Aorta (tissue), 5 donors: ENCODE measurements at regions of chr7 and their contacts with region 1.

Region 1: GRCh38 chr7:84529480-84530205 is 335.1 kb upstream of the SEMA3A start:
- DNase-seq: no peak
- ATAC-seq: no peak
- H3K4me3 ChIP-seq: no peak overlapping the region
- H3K27ac ChIP-seq: no peak overlapping the region
- H3K4me1 ChIP-seq: peaks cover 0 to 2% of the 10 kb centered on the region in 2 donors
- H3K27me3 ChIP-seq: no peaks in the 10 kb centered on the region

Region 2: GRCh38 chr7:84638339-84638697 is 108.7 kb after region 1 on chr7:
- intact Hi-C with region 1: no loop called
- DNase-seq: no peak
- ATAC-seq: no peak
- H3K4me3 ChIP-seq: no peak overlapping the region
- H3K27ac ChIP-seq: no peak overlapping the region
- H3K4me1 ChIP-seq: peaks cover 0 to 2% of the 10 kb centered on the region in 2 donors
- H3K27me3 ChIP-seq: no peaks in the 10 kb centered on the region

Region 3: DNA sequence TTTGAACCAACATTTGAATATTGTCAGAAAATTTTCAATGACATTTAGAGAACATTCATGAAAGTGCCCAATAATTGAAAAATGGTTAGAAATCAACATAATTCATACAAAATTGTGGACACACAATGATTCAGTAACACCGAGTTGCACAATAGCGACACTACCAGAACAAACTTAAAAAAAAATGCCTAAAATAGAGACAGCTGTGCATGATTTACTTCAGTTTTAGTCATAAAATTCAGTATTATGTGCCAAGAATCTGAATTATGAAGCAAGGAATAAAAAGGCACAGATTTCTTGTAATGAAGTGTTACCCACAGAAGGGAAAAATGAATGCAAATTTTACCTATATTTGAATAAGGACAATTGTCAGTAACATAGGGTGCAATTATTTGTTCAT is 261.2 kb after region 1 on chr7:
- intact Hi-C with region 1: loop called in 1 of 2 experiments (anchors 10 kb)
- DNase-seq: no peak
- ATAC-seq: no peak
- H3K4me3 ChIP-seq: no peak overlapping the region
- H3K27ac ChIP-seq: no peak overlapping the region
- H3K4me1 ChIP-seq: no peaks in the 10 kb centered on the region
- H3K27me3 ChIP-seq: no peaks in the 10 kb centered on the region

Region 4: GRCh38 chr7:84811362-84811761 is 281.7 kb after region 1 on chr7:
- intact Hi-C with region 1: loop called in 1 of 2 experiments (anchors 10 kb)
- DNase-seq: no peak
- ATAC-seq: no peak
- H3K4me3 ChIP-seq: no peak overlapping the region
- H3K27ac ChIP-seq: peak overlapping the region; percentile 28 to 71
- H3K4me1 ChIP-seq: no peaks in the 10 kb centered on the region
- H3K27me3 ChIP-seq: no peaks in the 10 kb centered on the region

Region 5: DNA sequence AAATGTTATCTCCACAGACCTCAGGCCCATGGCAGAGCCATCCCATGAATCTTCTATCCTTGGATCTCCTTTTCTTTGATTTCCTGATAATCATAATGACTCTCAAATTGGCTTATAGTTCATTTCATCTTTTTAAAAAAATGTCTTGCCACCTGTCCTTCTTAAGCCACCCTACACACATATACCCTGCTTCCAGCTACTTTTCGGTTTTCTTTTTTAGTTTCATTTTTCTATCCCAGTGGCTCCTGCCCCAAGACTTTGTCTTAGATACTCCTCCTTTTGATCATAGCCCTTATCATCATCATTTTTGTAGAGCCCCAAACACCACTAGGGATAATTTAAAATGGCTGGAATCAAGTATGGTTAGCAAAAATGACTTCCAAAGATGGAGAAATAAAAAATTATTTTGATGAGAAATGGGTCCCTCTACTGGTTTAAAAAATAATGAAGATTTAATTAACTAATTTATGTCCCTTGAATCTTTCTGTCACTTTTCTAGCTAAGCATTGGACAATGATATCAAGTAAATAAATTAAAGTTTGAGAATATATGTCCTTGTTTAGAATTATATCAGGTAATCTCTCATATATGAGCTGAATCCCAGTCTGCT is 934.5 kb after region 1 on chr7:
- intact Hi-C with region 1: no loop called
- DNase-seq: no peak
- ATAC-seq: no peak
- H3K4me3 ChIP-seq: no peak overlapping the region
- H3K27ac ChIP-seq: no peak overlapping the region
- H3K4me1 ChIP-seq: no peaks in the 10 kb centered on the region
- H3K27me3 ChIP-seq: no peaks in the 10 kb centered on the region